Heart left ventricle (tissue), 16 donors: ENCODE measurements at regions of chr10 and their contacts with region 1.

Region 1: DNA sequence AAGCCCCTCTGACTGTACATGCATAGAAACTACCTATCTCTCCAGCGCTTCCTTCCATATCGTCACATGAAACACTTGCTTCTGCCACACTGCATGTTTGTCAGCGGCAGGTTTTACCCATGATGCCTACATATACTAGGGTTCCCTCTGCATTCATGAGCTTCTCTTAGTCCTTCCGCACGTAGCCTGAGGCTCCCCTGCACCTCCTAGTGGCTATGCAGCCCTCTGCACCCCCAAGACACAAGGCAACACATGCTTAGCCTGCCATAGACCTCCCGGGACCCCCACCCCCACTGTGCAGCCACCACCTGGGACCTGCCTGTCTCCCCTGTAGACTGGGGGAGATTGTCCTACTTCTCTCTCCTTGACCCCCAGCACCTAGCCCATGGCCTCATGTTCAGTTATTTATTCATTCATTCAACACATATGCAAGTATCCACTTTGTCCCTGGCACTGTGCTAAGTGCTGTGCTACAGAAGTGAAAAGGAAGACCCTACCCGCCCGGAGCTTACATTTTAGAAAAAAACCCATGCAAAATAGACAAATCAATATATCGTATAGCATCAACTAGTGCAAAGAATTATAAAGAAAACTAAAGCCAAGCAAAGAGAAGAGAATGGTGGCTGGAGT is 23.5 kb downstream of the TMEM273 start:
- DNase-seq: peak in 1 of 5 donors; percentile 49
- ATAC-seq: peak; percentile 56 to 86 (median 78)
- H3K4me3 ChIP-seq: no peak overlapping the region
- H3K27ac ChIP-seq: no peak overlapping the region
- H3K4me1 ChIP-seq: peaks cover 0 to 25% (median 7%) of the 10 kb centered on the region in 12 donors
- H3K27me3 ChIP-seq: no peaks in the 10 kb centered on the region
- CTCF ChIP-seq: peak; percentile 50 to 74 (median 62)
- POLR2A ChIP-seq: no peak

Region 2: DNA sequence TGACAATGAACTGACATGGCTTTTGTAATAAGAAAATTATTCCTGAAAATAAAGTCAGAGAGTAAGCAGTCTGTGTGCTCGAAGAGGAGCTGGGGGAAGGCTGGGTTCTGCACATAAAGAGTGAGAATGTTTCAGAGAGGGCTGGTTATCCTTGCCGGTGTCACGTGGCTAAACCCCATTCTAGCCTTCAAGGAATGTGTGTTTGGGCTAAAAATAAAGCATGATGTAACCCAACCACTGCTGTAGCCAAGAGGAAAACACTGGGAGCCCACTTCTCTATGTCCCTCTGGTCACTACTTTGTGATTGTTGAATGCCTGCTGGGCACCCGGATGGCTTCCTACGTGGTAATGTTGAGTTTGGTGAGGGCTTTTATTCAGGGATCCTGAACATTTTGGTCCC is 456.5 kb before region 1 on chr10:
- intact Hi-C with region 1: no loop called
- DNase-seq: peak in 3 of 5 donors; percentile 38 to 59 (median 47)
- ATAC-seq: peak; percentile 80 to 84 (median 82)
- H3K4me3 ChIP-seq: no peak overlapping the region
- H3K27ac ChIP-seq: peak overlapping the region in 6 of 12 donors; percentile 14 to 71 (median 46)
- H3K4me1 ChIP-seq: peaks cover 0 to 52% (median 21%) of the 10 kb centered on the region in 12 donors
- H3K27me3 ChIP-seq: no peaks in the 10 kb centered on the region
- CTCF ChIP-seq: no peak
- POLR2A ChIP-seq: no peak

Region 3: DNA sequence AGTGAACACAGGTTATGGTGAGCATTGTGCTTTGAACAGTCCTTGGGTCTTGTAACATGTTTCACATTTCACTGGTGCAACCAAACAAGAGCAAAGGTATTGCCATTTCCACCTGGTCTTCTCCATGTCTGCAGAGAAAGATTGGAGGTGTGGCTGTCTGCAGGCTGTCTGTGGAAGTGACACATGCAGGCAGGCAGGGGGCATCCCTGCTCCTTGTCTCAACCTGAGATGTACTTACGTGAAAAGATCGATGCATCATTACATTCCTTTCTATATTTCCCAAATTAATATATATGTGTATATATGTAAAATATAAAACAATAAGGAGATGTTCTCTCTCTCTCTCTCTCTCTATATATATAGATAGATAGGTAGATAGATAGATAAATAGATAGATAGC is 279.3 kb before region 1 on chr10:
- intact Hi-C with region 1: loop called in 1 of 10 experiments (anchors 10 kb)
- DNase-seq: no peak
- ATAC-seq: no peak
- H3K4me3 ChIP-seq: no peak overlapping the region
- H3K27ac ChIP-seq: no peak overlapping the region
- H3K4me1 ChIP-seq: no peaks in the 10 kb centered on the region
- H3K27me3 ChIP-seq: no peaks in the 10 kb centered on the region
- CTCF ChIP-seq: peak in 8 of 12 donors; percentile 16 to 54 (median 42)
- POLR2A ChIP-seq: no peak

Region 4: GRCh38 chr10:48976196-48976595 is 188.5 kb before region 1 on chr10:
- intact Hi-C with region 1: loop called in 7 of 10 experiments (anchors 2 to 5 kb)
- DNase-seq: peak in 1 of 5 donors; percentile 38
- ATAC-seq: peak in 3 of 4 donors; percentile 67 to 73 (median 70)
- H3K4me3 ChIP-seq: no peak overlapping the region
- H3K27ac ChIP-seq: no peak overlapping the region
- H3K4me1 ChIP-seq: peaks cover 0 to 1% (median 0%) of the 10 kb centered on the region in 12 donors
- H3K27me3 ChIP-seq: no peaks in the 10 kb centered on the region
- CTCF ChIP-seq: peak in 10 of 12 donors; percentile 20 to 53 (median 38)
- POLR2A ChIP-seq: no peak

Region 5: DNA sequence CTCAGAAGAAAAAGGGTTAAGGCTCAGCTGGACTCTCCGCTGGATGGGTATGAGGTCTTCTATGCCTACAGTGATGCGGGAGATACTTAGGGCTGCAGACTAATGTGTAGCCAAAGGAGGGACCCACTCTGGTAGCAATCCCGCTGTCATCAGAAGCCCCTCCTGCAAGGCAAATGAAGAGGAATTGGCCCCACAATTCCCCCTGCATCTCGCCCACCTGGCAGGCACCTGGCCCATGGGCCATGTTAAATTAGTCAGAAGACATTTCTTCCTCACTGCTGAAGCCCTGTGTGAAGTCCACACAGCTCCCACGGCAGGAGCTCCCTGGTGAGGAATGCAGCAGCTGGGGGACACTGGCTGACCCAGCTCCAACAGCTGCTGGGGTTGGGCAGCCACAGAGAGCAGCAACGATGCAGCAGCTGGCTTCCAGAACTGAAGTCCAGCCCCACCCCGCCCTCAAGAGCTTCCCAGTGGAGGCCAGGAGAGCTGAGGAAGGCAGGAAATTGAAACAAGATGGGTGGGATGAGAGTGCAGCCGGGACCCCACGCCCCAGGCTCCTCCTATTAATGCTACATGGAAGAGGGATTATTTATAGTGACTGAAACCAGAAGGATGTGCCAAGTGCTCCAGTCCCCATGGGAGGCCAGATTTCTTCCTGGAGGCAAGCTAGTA is 54.9 kb before region 1 on chr10:
- intact Hi-C with region 1: loop called in 1 of 10 experiments (anchors 5 kb)
- DNase-seq: peak; percentile 81 to 91 (median 86)
- ATAC-seq: peak; percentile 76 to 88 (median 81)
- H3K4me3 ChIP-seq: peak overlapping the region in 4 of 12 donors; percentile 7 to 33 (median 22)
- H3K27ac ChIP-seq: peak overlapping the region in 9 of 12 donors; percentile 6 to 72 (median 53)
- H3K4me1 ChIP-seq: peaks cover 7 to 100% (median 68%) of the 10 kb centered on the region in 12 donors
- H3K27me3 ChIP-seq: no peaks in the 10 kb centered on the region
- CTCF ChIP-seq: no peak
- POLR2A ChIP-seq: no peak

Region 6: GRCh38 chr10:49207113-49207512 is 42.4 kb after region 1 on chr10:
- intact Hi-C with region 1: no loop called
- DNase-seq: no peak
- ATAC-seq: no peak
- H3K4me3 ChIP-seq: no peak overlapping the region
- H3K27ac ChIP-seq: no peak overlapping the region
- H3K4me1 ChIP-seq: peaks cover 0 to 6% (median 0%) of the 10 kb centered on the region in 12 donors
- H3K27me3 ChIP-seq: no peaks in the 10 kb centered on the region
- CTCF ChIP-seq: no peak
- POLR2A ChIP-seq: no peak